Activated CD4-positive, alpha-beta memory T cell treated with anti-CD3 and anti-CD28 coated beads for 36 hours (primary cell): ENCODE measurements at regions of chr1 and their contacts with region 1.

Region 1: GRCh38 chr1:205204552-205204951 is 7.0 kb downstream of the DSTYK start:
- DNase-seq: no peak
- H3K4me3 Mint-ChIP-seq: no peak overlapping the region
- H3K27ac Mint-ChIP-seq: peak overlapping the region; percentile 6
- H3K4me1 Mint-ChIP-seq: peaks cover 66% of the 10 kb centered on the region
- H3K27me3 Mint-ChIP-seq: no peaks in the 10 kb centered on the region

Region 2: GRCh38 chr1:205186191-205186590 is 18.4 kb before region 1 on chr1:
- CTCF ChIA-PET with region 1: interaction called, 11 read pairs
- POLR2A ChIA-PET with region 1: interaction called, 9 read pairs
- intact Hi-C with region 1: loop called (anchors 1 kb)
- DNase-seq: no peak
- H3K4me3 Mint-ChIP-seq: no peak overlapping the region
- H3K27ac Mint-ChIP-seq: peak overlapping the region; percentile 38
- H3K4me1 Mint-ChIP-seq: peaks cover 54% of the 10 kb centered on the region
- H3K27me3 Mint-ChIP-seq: no peaks in the 10 kb centered on the region

Region 3: GRCh38 chr1:205237526-205238484 is 33.3 kb after region 1 on chr1:
- CTCF ChIA-PET with region 1: interaction called, 3 read pairs
- POLR2A ChIA-PET with region 1: interaction called, 5 read pairs
- intact Hi-C with region 1: loop called (anchors 2 kb)
- DNase-seq: peak; percentile 77
- H3K4me3 Mint-ChIP-seq: peak overlapping the region; percentile 50
- H3K27ac Mint-ChIP-seq: peak overlapping the region; percentile 92
- H3K4me1 Mint-ChIP-seq: peaks cover 41% of the 10 kb centered on the region
- H3K27me3 Mint-ChIP-seq: peaks cover 5% of the 10 kb centered on the region